CD14-positive monocyte (primary cell): ENCODE measurements at regions of chr5 and their contacts with region 1.

Region 1: DNA sequence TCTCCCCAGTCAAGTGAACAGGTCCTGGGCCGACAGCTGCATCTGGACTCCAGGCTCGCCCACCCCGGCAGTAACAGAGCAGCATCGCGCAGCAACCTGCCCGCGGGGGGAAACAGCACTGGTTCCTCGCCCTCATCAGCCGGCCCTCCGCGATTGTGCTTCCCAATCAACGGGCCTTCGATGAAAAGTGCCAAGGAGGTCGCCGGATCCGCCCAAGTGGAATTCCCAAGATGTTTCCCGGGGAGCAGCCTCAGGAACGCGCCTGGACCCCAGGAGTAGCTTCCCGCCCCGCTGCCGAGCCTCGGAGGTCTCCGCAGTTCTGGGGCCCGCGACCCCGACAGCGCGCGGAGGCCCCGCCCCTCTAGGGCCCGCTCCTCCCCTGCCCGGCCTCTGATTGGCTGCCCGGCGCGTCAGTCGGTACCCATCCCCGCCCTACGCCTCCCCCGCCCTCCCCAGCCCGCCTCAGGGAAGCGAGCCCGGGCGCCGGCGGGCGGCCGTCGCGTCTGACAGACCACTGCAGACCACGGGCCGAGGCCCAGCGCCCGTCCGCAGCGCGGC is at the start of gene OTULINL:
- DNase-seq: peak; percentile 75 to 78 (median 77)
- H3K4me3 ChIP-seq: peak within 1 kb of the TSS; percentile 77 to 94 (median 91)
- H3K4me3 Mint-ChIP-seq: peak within 1 kb of the TSS; percentile 92 to 93
- H3K27ac ChIP-seq: peak within 1 kb of the TSS; percentile 55 to 91
- H3K27ac Mint-ChIP-seq: peak within 1 kb of the TSS; percentile 82 to 95 (median 87)
- H3K4me1 ChIP-seq: peaks cover 52 to 58% of the 10 kb centered on the region in 2 donors
- H3K4me1 Mint-ChIP-seq: peaks cover 54% of the 10 kb centered on the region
- H3K27me3 ChIP-seq: no peaks in the 10 kb centered on the region
- H3K27me3 Mint-ChIP-seq: peaks cover 0 to 3% (median 0%) of the 10 kb centered on the region in 3 donors
- CTCF ChIP-seq: no peak
- polyA plus RNA-seq, gene OTULINL: 56.8 to 107 (median 92.9) TPM

Region 2: GRCh38 chr5:14286574-14287421 is 294.6 kb before region 1 on chr5:
- intact Hi-C with region 1: no loop called
- DNase-seq: no peak
- H3K4me3 ChIP-seq: no peak overlapping the region
- H3K4me3 Mint-ChIP-seq: no peak overlapping the region
- H3K27ac ChIP-seq: peak overlapping the region in 1 of 2 donors; percentile 22
- H3K27ac Mint-ChIP-seq: peak overlapping the region in 2 of 7 donors; percentile 33 to 76
- H3K4me1 ChIP-seq: peaks cover 3 to 4% of the 10 kb centered on the region in 2 donors
- H3K4me1 Mint-ChIP-seq: peaks cover 13% of the 10 kb centered on the region
- H3K27me3 ChIP-seq: no peaks in the 10 kb centered on the region
- H3K27me3 Mint-ChIP-seq: no peaks in the 10 kb centered on the region
- CTCF ChIP-seq: no peak

Region 3: DNA sequence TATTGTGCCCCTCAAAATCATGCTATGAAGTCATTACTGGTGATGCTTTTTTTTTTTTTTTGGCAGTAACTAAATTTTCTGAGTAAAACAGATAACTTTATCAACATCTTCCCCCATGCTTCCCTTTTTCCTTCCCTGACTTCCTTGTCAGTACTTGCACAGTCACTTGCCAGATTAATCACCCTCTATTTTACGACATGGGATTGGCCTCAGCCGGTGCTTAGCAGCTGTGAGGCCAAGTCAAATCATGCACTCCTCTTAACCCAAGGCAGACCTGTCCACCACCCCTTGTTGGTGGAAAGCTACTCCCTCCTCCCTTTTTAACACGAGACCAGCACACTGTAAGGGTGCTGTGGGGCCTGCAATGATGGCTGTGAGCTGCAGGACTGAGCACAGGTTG is 117.8 kb before region 1 on chr5:
- intact Hi-C with region 1: loop called in 1 of 2 experiments (anchors 5 kb)
- DNase-seq: peak; percentile 88 to 90 (median 89)
- H3K4me3 ChIP-seq: peak overlapping the region in 1 of 3 experiments; percentile 17
- H3K4me3 Mint-ChIP-seq: peak overlapping the region in 1 of 2 donors; percentile 51
- H3K27ac ChIP-seq: peak overlapping the region; percentile 94 to 98
- H3K27ac Mint-ChIP-seq: peak overlapping the region; percentile 93 to 98 (median 94)
- H3K4me1 ChIP-seq: peaks cover 34 to 38% of the 10 kb centered on the region in 2 donors
- H3K4me1 Mint-ChIP-seq: peaks cover 33% of the 10 kb centered on the region
- H3K27me3 ChIP-seq: no peaks in the 10 kb centered on the region
- H3K27me3 Mint-ChIP-seq: peaks cover 0 to 1% (median 0%) of the 10 kb centered on the region in 3 donors
- CTCF ChIP-seq: no peak

Region 4: GRCh38 chr5:14545308-14545707 is 36.1 kb before region 1 on chr5:
- intact Hi-C with region 1: loop called (anchors 5 kb)
- DNase-seq: peak; percentile 51 to 86 (median 84)
- H3K4me3 ChIP-seq: peak overlapping the region in 2 of 3 experiments; percentile 19 to 58
- H3K4me3 Mint-ChIP-seq: peak overlapping the region; percentile 51 to 89
- H3K27ac ChIP-seq: peak overlapping the region; percentile 37 to 84
- H3K27ac Mint-ChIP-seq: peak overlapping the region; percentile 85 to 97 (median 93)
- H3K4me1 ChIP-seq: peaks cover 77 to 78% of the 10 kb centered on the region in 2 donors
- H3K4me1 Mint-ChIP-seq: peaks cover 78% of the 10 kb centered on the region
- H3K27me3 ChIP-seq: no peaks in the 10 kb centered on the region
- H3K27me3 Mint-ChIP-seq: peaks cover 0 to 2% (median 0%) of the 10 kb centered on the region in 3 donors
- CTCF ChIP-seq: no peak

Region 5: DNA sequence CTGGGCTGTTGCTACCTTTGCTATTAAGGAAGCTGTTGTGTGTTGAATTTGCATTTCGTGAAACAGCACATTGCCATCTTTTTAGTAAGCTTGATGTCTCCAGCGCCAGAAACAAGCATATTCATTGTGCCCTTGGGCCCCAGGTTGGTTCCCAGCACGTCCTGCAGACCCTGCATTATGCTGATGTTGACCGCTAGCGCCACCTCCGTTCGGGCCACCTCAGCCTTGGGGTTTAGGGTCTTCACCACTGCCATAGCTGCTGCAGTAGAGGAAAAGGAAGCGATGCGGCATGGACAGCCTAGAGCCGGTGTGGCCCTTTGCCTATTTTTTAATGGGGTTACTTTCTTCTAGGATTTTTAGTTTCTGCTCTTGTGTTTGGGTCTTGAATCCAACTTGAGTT is 59.4 kb after region 1 on chr5:
- intact Hi-C with region 1: no loop called
- DNase-seq: no peak
- H3K4me3 ChIP-seq: no peak overlapping the region
- H3K4me3 Mint-ChIP-seq: no peak overlapping the region
- H3K27ac ChIP-seq: no peak overlapping the region
- H3K27ac Mint-ChIP-seq: no peak overlapping the region
- H3K4me1 ChIP-seq: no peaks in the 10 kb centered on the region
- H3K4me1 Mint-ChIP-seq: no peaks in the 10 kb centered on the region
- H3K27me3 ChIP-seq: no peaks in the 10 kb centered on the region
- H3K27me3 Mint-ChIP-seq: peaks cover 5 to 10% (median 7%) of the 10 kb centered on the region in 3 donors
- CTCF ChIP-seq: no peak

Region 6: DNA sequence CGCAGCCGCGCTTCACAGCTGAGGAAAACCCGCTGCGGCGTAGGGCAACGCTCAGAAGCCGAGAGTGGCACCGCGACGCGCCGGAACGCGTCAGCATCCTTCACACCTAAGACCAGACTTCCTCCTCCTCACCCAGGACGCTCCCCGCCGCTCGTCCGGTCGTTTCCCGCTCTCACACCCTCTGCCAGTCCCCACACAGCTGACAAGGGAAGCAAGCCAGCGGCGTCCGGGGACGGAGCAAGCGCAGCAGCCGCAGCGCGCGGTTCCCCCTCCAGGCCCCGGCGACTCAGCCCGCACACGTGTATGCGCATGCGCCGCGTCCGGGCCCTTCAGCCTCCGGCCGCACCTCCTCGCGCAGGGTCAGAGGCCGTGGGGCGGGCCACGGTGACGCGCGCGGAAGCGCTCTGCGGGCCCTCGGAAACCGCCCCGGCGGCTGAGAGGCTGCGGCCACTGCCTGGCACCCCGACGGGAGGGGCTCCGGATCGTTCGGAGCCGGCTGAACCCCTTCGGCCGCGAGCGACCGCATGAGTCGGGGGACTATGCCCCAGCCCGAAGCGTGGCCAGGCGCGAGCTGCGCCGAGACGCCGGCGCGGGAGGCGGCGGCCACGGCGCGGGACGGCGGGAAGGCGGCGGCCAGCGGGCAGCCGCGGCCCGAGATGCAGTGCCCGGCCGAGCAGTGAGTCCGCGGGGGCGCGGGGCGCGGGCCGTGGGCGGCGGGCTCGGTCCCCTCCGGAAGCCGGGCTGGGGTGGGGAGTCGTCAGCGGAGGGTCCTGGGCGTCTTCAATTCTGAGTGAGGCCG is 83.1 kb after region 1 on chr5 and contains the start of gene OTULIN:
- intact Hi-C with region 1: loop called (anchors 5 to 10 kb)
- DNase-seq: peak; percentile 94 to 96 (median 96)
- H3K4me3 ChIP-seq: peak within 1 kb of the TSS; percentile 51 to 85 (median 74)
- H3K4me3 Mint-ChIP-seq: peak within 1 kb of the TSS; percentile 91 to 96
- H3K27ac ChIP-seq: peak within 1 kb of the TSS; percentile 71 to 90
- H3K27ac Mint-ChIP-seq: peak within 1 kb of the TSS; percentile 92 to 97 (median 96)
- H3K4me1 ChIP-seq: peaks cover 28 to 37% of the 10 kb centered on the region in 2 donors
- H3K4me1 Mint-ChIP-seq: peaks cover 49% of the 10 kb centered on the region
- H3K27me3 ChIP-seq: no peaks in the 10 kb centered on the region
- H3K27me3 Mint-ChIP-seq: peaks cover 0 to 2% (median 0%) of the 10 kb centered on the region in 3 donors
- CTCF ChIP-seq: no peak
- polyA plus RNA-seq, gene OTULIN: 13.7 to 14.2 (median 14.0) TPM